Mucosa of descending colon (tissue), 3 donors: ENCODE measurements at regions of chr11 and their contacts with region 1.

Region 1: GRCh38 chr11:125164422-125165110 is at the start of gene PKNOX2:
- DNase-seq: peak; percentile 58 to 74 (median 72)
- ATAC-seq: peak; percentile 75
- H3K4me3 ChIP-seq: peak within 1 kb of the TSS; percentile 22
- H3K4me1 ChIP-seq: peaks cover 11% of the 10 kb centered on the region
- CTCF ChIP-seq: peak; percentile 26
- total RNA-seq, gene PKNOX2: 1.5 to 4.0 (median 1.9) TPM

Region 2: GRCh38 chr11:125345421-125346178 is 181.0 kb after region 1 on chr11:
- intact Hi-C with region 1: loop called in 1 of 2 experiments (anchors 5 kb)
- DNase-seq: peak in 2 of 3 donors; percentile 69 to 73
- ATAC-seq: peak; percentile 67
- H3K4me3 ChIP-seq: no peak overlapping the region
- H3K4me1 ChIP-seq: no peaks in the 10 kb centered on the region
- CTCF ChIP-seq: peak; percentile 63

Region 3: DNA sequence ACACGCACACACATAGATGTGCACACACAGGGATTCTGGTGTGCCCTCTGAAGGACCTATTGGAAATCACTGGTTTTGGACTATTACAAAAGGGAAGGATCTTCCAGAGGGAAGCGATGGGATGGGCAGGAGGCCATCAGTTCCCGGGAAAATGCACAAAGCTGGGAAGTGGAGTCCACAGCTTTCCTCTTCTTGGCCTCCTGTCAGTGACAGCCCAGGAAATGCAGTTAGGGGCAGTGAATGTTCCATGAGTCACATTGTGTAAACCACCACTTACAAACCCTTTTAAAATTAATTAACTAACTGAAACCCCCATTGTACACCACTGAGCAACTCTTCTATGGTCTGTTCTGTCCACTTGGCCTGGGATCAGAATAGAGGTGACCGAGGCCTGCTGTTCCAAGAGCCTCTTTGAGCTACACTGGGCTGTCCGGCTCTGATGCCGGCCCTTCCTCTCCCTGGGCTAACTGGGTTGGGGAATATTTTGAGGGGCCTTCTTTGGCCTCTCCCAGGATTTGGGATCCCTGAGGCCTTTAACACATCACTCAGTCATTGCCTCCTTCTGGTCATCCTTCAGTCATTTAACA is 193.8 kb after region 1 on chr11:
- intact Hi-C with region 1: no loop called
- DNase-seq: no peak
- ATAC-seq: no peak
- H3K4me3 ChIP-seq: no peak overlapping the region
- H3K4me1 ChIP-seq: no peaks in the 10 kb centered on the region
- CTCF ChIP-seq: no peak